ENCODE measurements at regions of chr11 and their contacts with region 1.

Region 1: GRCh38 chr11:62542750-62543567 is 3.6 kb downstream of the AHNAK start:
- DNase-seq: peak; percentile 47 to 88
- H3K4me3 ChIP-seq: peak overlapping the region; percentile 98
- H3K27ac ChIP-seq: peak overlapping the region; percentile 96 to 99
- H3K4me1 ChIP-seq: peaks cover 36 to 52% of the 10 kb centered on the region in 2 donors
- H3K27me3 ChIP-seq: no peaks in the 10 kb centered on the region
- CTCF ChIP-seq: peak; percentile 98 to 99 (median 99)

Region 2: DNA sequence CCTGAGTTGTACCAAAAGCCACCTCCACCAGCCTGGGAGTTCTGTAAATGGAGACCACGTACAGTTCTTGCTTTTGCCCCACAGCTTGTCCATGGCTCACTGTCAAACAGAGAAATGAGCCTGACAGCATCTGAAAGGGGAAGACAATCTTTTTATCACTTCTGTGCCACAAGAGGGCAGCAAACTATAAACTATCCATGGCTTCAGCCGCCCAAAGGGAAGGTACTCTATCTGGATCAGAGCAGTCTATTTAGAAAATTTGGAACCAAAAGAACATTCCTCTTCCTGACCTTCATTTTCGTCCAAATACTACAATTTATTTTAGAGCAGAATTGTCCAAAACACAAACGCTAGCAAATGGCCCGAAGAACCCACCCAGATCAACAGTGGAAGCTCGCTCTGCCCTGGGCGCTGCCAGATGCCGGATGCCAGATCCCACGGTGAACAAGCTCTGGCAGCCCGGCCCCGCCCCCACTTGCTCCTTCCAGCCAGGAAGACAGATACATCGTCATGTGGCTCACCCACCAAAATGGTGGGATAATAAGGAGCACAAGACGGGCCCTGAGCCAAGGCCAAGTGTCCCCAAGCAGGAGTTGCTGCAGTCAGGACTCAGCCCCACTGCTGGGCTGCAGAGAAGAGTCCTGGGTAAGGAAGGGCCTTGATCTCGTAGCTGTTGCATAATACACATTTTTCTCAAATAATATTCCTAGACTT is 148.0 kb before region 1 on chr11:
- intact Hi-C with region 1: loop called (anchors 1 kb)
- DNase-seq: peak; percentile 24 to 89
- H3K4me3 ChIP-seq: peak overlapping the region; percentile 44 to 58
- H3K27ac ChIP-seq: peak overlapping the region; percentile 56 to 58
- H3K4me1 ChIP-seq: peaks cover 20 to 27% of the 10 kb centered on the region in 2 donors
- H3K27me3 ChIP-seq: no peaks in the 10 kb centered on the region
- CTCF ChIP-seq: peak; percentile 67 to 77 (median 69)

Region 3: DNA sequence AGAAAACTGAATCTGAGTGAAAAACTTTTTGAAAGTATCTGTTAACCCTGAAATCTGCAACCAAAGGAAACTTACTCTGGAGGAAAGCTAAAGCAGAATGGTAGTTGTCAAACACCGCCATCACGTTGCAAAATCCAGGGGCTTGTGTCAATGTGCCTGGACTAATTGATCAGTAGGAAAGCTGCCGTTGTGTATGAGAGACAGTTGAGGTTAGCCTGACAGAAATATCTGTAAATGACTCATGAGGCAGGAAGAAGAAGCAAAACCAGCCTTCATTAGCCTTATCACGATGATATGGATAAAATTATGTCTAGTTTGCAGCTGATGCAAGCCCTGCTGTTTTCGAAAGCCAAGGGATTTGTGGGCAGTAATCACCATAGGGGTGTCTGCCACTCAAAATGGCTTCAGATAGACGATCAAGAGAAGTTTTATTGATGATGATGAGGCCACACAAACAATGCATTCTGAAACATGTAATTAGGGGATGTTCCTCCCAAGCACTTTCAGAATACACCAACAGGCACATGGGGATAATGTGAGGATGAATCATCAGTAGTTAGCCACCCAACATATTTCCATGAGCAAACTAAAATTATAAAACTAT is 115.2 kb before region 1 on chr11:
- intact Hi-C with region 1: loop called (anchors 1 kb)
- DNase-seq: no peak
- H3K4me3 ChIP-seq: no peak overlapping the region
- H3K27ac ChIP-seq: peak overlapping the region in 1 of 2 donors; percentile 35
- H3K4me1 ChIP-seq: no peaks in the 10 kb centered on the region
- H3K27me3 ChIP-seq: no peaks in the 10 kb centered on the region
- CTCF ChIP-seq: no peak

Region 4: DNA sequence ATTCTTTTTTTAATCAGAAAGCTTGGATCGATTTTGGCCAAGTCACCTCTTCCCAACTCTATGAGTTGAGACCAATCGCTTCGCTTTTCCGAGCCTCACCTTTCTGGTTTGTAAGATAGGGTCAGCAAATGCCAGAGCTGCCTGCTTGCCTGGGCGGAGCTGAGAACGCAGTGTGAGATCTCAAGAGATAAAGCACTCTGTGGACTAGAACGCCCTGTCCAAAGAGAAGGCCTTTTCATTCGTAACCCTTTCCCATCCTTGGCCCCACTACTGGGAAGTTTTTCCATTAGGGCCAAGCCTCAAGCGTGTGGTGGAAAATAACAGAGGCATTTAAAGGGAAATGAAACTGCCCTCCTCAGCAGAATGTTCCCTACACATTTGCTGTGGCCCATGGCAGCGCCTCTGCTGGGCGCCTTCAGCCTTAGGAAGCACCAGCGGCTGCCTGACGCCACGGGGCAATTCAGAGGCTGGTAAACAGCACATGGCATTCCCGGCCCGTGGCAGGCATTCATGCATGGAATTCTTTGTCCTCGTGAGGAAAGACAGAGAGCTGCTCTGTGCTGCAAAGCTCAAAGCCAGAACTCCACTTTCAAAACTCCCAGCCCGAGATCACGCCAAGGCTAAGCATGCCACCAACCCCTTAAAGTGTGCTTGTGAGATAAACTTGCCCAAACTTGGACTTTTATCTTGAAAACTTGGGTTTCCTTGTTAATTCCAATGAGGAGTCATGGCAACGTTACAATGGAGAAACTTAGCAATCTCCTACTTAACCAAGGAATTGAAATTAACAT is 34.5 kb before region 1 on chr11:
- intact Hi-C with region 1: loop called (anchors 2 kb)
- DNase-seq: peak; percentile 53 to 90
- H3K4me3 ChIP-seq: peak overlapping the region; percentile 20 to 37
- H3K27ac ChIP-seq: peak overlapping the region; percentile 67 to 76
- H3K4me1 ChIP-seq: peaks cover 0 to 19% of the 10 kb centered on the region in 2 donors
- H3K27me3 ChIP-seq: no peaks in the 10 kb centered on the region
- CTCF ChIP-seq: peak; percentile 29 to 62 (median 59)

Region 5: DNA sequence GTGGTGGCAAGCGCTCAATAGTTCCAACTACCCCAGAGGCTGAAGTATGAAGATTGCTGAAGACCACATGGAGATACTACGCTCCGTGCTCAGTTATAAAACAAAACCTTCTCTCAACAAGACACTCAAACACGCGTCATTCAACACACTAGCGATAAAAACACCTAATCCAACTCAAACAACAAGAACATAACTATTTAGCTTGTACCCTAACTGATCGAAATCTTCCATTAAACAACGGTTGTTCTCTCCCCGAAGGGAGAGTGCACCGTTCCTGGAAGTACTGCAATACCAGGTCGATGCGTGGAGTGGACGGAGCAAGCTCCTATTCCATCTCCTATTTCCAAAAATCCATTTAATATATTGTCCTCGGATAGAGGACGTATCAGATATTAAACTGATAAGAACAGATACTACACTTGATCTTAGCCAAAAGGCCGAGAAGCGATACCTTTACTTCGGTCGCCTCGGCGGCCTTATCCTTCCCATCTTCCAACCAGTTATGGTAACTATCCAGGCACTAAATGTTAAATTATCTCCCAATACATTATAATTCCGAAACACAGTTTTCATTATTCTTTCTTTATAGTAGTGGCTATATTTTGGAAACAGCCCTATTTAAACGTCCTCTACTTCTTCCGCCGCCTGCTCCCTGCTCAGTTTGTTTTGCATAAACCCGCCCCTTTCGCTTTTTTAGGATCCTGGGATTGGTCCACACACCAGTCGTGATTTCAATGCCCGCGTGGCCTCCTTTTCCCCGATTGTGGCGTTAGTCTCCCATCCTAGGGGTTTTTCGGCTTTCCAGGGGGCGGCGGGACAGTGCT is 298.6 kb after region 1 on chr11:
- intact Hi-C with region 1: loop called (anchors 5 kb)
- DNase-seq: peak; percentile 59 to 94
- H3K4me3 ChIP-seq: peak overlapping the region; percentile 79 to 80
- H3K27ac ChIP-seq: peak overlapping the region; percentile 93 to 95
- H3K4me1 ChIP-seq: peaks cover 6 to 13% of the 10 kb centered on the region in 2 donors
- H3K27me3 ChIP-seq: no peaks in the 10 kb centered on the region
- CTCF ChIP-seq: no peak

Measured in ascending aorta (tissue), 2 donors.